Natural killer cell (primary cell): ENCODE measurements at regions of chr17 and their contacts with region 1.

Region 1: GRCh38 chr17:2828397-2829038 is 32.3 kb downstream of the RAP1GAP2 start:
- DNase-seq: peak; percentile 85 to 86
- ATAC-seq: peak; percentile 93 to 97 (median 94)
- H3K4me3 ChIP-seq: no peak overlapping the region
- H3K4me3 Mint-ChIP-seq: peak overlapping the region; percentile 80
- H3K27ac ChIP-seq: no peak overlapping the region
- H3K27ac Mint-ChIP-seq: peak overlapping the region; percentile 68 to 86
- H3K4me1 ChIP-seq: peaks cover 57% of the 10 kb centered on the region
- H3K4me1 Mint-ChIP-seq: peaks cover 42 to 49% of the 10 kb centered on the region in 2 donors
- H3K27me3 ChIP-seq: no peaks in the 10 kb centered on the region
- H3K27me3 Mint-ChIP-seq: no peaks in the 10 kb centered on the region
- CTCF ChIP-seq: peak; percentile 93

Region 2: GRCh38 chr17:2796164-2797125 is 32.1 kb before region 1 on chr17 and contains the start of gene RAP1GAP2:
- intact Hi-C with region 1: loop called (anchors 5 kb)
- DNase-seq: peak; percentile 70 to 88
- ATAC-seq: peak; percentile 62 to 90 (median 76)
- H3K4me3 ChIP-seq: peak within 1 kb of the TSS; percentile 72
- H3K4me3 Mint-ChIP-seq: peak within 1 kb of the TSS; percentile 93
- H3K27ac ChIP-seq: peak within 1 kb of the TSS; percentile 7
- H3K27ac Mint-ChIP-seq: peak within 1 kb of the TSS; percentile 73 to 88
- H3K4me1 ChIP-seq: peaks cover 85% of the 10 kb centered on the region
- H3K4me1 Mint-ChIP-seq: peaks cover 84 to 94% of the 10 kb centered on the region in 2 donors
- H3K27me3 ChIP-seq: no peaks in the 10 kb centered on the region
- H3K27me3 Mint-ChIP-seq: no peaks in the 10 kb centered on the region
- CTCF ChIP-seq: no peak
- total RNA-seq, gene RAP1GAP2: 274 to 418 (median 390) TPM

Region 3: DNA sequence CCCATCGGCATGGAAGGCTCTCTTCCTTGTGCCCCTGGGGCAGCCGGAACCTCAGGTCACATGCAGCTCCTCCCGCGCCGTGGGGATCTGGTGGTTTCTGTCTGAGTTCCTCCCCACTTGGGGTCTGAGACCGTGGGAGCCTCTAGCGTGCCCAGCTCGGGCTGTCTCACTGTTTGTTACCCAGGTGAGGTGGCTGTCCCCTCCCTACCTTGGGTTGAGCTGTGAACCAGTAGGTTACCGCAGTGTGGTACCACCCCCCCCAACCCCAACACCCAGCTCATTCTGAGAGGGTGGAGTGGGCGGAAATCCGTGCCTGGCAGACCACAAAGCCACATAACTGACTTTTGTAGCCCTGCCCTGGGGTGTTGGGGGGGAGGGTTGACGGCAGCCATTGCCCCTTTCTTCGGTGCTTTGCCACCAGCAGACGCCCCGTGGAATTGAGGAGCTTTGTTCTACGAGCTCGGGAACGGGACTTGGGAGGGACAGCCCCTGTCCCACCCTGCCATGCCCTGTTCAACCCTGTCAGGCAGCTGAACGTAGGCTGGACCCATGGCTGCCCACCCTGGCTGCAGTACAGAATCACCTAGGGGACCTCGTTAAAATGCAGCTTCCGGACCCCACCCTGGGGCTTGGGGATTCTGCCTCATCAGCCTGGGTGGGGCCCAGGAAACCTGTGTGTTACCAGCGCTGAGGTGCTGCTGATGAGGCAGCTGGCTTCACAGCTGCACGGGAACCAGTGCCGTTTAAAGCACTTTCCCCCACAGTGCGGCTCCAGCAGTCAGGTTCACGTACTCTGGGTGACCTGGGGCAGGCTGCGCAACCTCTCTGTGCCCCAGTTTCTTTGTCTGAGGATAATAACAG is 13.8 kb before region 1 on chr17:
- intact Hi-C with region 1: loop called (anchors 2 kb)
- DNase-seq: peak; percentile 91 to 98
- ATAC-seq: peak; percentile 65 to 87 (median 77)
- H3K4me3 ChIP-seq: peak overlapping the region; percentile 42
- H3K4me3 Mint-ChIP-seq: peak overlapping the region; percentile 72
- H3K27ac ChIP-seq: peak overlapping the region; percentile 79
- H3K27ac Mint-ChIP-seq: peak overlapping the region; percentile 89 to 92
- H3K4me1 ChIP-seq: peaks cover 79% of the 10 kb centered on the region
- H3K4me1 Mint-ChIP-seq: peaks cover 46 to 64% of the 10 kb centered on the region in 2 donors
- H3K27me3 ChIP-seq: no peaks in the 10 kb centered on the region
- H3K27me3 Mint-ChIP-seq: no peaks in the 10 kb centered on the region
- CTCF ChIP-seq: no peak

Region 4: DNA sequence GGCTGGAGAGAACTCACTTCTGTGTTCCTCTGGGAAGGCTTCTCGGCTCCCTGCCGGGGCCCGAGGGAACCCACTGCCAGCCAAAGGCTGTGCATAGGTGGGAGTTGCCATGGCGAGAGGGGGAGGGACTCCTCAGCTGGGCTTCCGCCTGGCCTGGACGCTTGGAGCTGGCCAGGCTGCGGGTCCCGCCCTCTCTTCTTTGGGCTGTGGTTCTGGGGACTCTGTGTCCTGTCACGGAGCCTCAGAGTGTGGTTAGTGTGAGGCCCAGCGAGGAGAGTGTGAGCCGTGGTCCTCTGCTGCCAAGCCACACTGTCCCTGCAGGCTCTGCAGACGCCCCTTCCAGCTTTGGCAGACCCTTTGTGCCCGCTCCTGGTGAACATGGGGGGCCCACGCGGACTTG is 111.8 kb after region 1 on chr17:
- intact Hi-C with region 1: loop called (anchors 5 kb)
- DNase-seq: no peak
- ATAC-seq: peak in 1 of 3 donors; percentile 17
- H3K4me3 ChIP-seq: no peak overlapping the region
- H3K4me3 Mint-ChIP-seq: no peak overlapping the region
- H3K27ac ChIP-seq: no peak overlapping the region
- H3K27ac Mint-ChIP-seq: peak overlapping the region; percentile 66 to 81
- H3K4me1 ChIP-seq: peaks cover 45% of the 10 kb centered on the region
- H3K4me1 Mint-ChIP-seq: peaks cover 55 to 83% of the 10 kb centered on the region in 2 donors
- H3K27me3 ChIP-seq: no peaks in the 10 kb centered on the region
- H3K27me3 Mint-ChIP-seq: no peaks in the 10 kb centered on the region
- CTCF ChIP-seq: no peak

Region 5: DNA sequence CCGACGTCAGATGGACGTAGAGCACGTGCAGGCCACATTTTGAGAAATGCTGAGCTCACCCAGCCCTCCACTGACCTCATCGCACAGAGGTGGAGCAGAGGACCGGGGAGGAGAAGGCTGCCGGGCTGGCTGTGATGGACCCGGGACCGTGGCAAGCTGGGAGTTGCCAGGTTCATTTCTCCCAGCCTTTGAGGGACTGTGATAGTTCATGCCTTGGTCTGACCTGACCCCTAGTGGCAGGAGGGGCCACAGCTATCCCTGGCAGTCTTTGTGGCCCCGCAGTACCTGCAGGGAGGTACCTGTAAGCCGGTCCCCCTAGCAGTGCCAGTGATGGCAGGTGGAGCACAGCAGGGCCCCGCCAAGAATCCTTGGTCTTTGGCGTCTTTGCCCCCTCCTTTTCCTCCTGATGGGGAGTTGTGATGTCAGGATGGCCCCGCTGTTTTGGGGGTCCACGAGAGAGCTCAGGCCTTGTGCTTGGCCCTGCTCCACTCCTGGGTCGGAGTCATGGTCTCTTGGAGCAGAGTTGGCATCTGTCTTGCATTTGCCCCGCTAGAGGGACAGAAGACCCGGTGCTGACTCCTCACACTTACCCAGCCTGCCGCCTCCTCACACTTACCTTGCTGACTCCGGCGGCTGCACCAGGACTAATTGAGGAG is 184.5 kb after region 1 on chr17:
- intact Hi-C with region 1: loop called (anchors 1 kb)
- DNase-seq: peak in 1 of 2 donors; percentile 72
- ATAC-seq: peak; percentile 60 to 73 (median 68)
- H3K4me3 ChIP-seq: no peak overlapping the region
- H3K4me3 Mint-ChIP-seq: no peak overlapping the region
- H3K27ac ChIP-seq: no peak overlapping the region
- H3K27ac Mint-ChIP-seq: peak overlapping the region in 1 of 2 donors; percentile 69
- H3K4me1 ChIP-seq: no peaks in the 10 kb centered on the region
- H3K4me1 Mint-ChIP-seq: peaks cover 0 to 6% of the 10 kb centered on the region in 2 donors
- H3K27me3 ChIP-seq: no peaks in the 10 kb centered on the region
- H3K27me3 Mint-ChIP-seq: no peaks in the 10 kb centered on the region
- CTCF ChIP-seq: peak; percentile 42

Region 6: DNA sequence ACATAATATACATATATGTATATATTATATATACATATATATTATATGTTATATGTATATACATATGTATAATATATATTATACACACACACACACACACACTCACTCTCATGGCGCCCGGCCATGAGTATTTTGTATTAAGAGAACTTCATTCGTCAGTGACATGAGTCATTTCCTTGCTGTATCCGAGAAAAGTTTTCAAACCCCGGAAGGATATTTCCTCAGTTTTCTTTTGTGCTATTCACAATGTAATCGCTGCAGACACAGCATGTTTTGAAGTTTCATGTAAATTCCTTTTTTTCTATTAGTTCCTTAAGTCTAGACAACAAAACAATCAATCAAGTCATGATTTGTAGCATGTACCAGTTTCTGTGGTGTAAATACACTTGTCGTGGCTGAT is 201.6 kb after region 1 on chr17:
- intact Hi-C with region 1: no loop called
- DNase-seq: no peak
- ATAC-seq: no peak
- H3K4me3 ChIP-seq: no peak overlapping the region
- H3K4me3 Mint-ChIP-seq: no peak overlapping the region
- H3K27ac ChIP-seq: no peak overlapping the region
- H3K27ac Mint-ChIP-seq: peak overlapping the region in 1 of 2 donors; percentile 11
- H3K4me1 ChIP-seq: no peaks in the 10 kb centered on the region
- H3K4me1 Mint-ChIP-seq: peaks cover 7 to 30% of the 10 kb centered on the region in 2 donors
- H3K27me3 ChIP-seq: no peaks in the 10 kb centered on the region
- H3K27me3 Mint-ChIP-seq: no peaks in the 10 kb centered on the region
- CTCF ChIP-seq: no peak